Activated B cell treated with CpG ODN at 0.5 μM for 24 hours (primary cell): ENCODE measurements at regions of chr11 and their contacts with region 1.

Region 1: GRCh38 chr11:110092515-110093404 is at the start of gene ZC3H12C:
- DNase-seq: peak; percentile 40
- ATAC-seq: peak; percentile 79
- H3K4me3 Mint-ChIP-seq: peak within 1 kb of the TSS; percentile 88
- H3K27ac Mint-ChIP-seq: peak within 1 kb of the TSS; percentile 33
- H3K4me1 Mint-ChIP-seq: peaks cover 12% of the 10 kb centered on the region
- H3K27me3 Mint-ChIP-seq: peaks cover 43% of the 10 kb centered on the region
- CTCF ChIP-seq: no peak
- total RNA-seq, gene ZC3H12C: 0.83 and 0.95 TPM in 2 replicates

Region 2: DNA sequence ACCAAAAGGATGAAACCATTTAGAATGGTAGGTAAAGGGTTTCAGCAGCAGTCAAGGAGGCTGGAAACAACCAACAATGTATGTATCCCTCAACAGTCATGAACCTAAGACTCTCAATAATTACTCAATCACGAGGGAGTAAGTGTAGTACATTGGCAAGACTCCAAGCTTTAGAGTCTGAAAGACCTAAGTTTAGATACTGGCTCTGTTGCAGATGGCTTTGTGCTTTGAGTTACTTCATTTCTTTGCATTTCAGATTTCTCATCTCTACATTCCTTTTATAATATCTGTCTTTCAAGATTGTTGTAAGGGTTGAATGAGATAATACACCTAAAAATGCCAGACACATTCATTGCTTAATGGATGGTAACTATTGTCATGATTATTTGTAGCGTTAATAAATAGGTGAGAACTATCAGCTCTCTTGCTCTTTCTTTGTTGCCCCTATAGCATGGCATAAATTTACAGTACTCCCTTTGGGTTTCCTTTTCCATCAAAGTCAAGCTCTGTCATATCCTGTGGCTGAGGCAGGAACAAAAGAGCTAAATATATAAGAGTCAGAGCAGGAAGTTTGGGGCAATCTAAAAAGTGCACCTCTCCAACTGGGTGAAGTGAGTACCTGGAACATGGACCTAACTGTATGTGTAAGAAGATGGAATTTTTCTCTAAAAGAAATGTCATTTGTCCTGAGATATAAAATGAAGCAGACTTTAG is 227.8 kb before region 1 on chr11:
- CTCF ChIA-PET with region 1: no interaction called
- POLR2A ChIA-PET with region 1: no interaction called
- intact Hi-C with region 1: loop called (anchors 5 kb)
- DNase-seq: no peak
- ATAC-seq: no peak
- H3K4me3 Mint-ChIP-seq: no peak overlapping the region
- H3K27ac Mint-ChIP-seq: peak overlapping the region; percentile 74
- H3K4me1 Mint-ChIP-seq: peaks cover 17% of the 10 kb centered on the region
- H3K27me3 Mint-ChIP-seq: no peaks in the 10 kb centered on the region
- CTCF ChIP-seq: no peak